ENCODE measurements at regions of chr9 and their contacts with region 1.

Region 1: DNA sequence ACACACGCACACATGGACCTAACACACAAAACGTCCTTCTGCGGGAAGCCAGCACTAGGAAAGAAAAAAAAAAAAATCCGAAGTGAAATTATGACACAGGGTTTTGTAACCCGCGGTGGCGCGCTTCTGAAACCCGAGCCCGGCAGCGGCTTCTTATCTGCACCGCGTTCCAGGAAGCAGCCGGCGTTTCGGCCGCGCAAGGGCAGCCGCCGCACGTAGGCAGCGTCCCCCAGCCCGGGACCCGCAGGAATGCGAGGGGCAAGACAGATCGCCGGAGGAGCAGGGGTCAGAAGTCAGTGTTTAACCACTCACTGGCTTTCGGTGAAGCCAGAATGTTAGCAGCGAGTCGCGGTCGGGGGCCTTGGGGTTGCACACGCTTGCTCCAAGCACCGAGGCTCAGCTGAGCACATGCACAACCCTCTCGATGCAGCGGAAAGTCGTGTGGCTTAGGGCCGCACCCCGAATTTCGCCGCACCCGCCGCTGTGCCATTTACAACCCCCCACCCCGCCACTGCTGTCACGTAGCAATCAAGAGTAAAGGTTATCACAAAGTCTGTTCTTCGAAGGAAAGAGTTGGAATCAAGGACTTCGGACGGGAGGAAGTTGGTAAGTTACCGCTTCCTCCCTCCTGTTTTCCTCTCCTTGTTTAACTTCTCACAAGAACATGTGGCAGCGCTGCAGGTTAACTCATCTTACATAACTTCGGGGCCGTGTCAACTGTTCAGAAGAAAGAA is 167.9 kb downstream of the AUH start:
- DNase-seq: peak; percentile 70
- H3K4me3 Mint-ChIP-seq: peak overlapping the region; percentile 57
- H3K27ac Mint-ChIP-seq: peak overlapping the region; percentile 81
- H3K4me1 Mint-ChIP-seq: peaks cover 36% of the 10 kb centered on the region
- H3K27me3 Mint-ChIP-seq: no peaks in the 10 kb centered on the region
- CTCF ChIP-seq: no peak

Region 2: GRCh38 chr9:91001146-91001611 is 192.6 kb before region 1 on chr9:
- CTCF ChIA-PET with region 1: no interaction called
- POLR2A ChIA-PET with region 1: interaction called, 19 read pairs
- intact Hi-C with region 1: loop called (anchors 1 kb)
- DNase-seq: peak; percentile 99
- H3K4me3 Mint-ChIP-seq: no peak overlapping the region
- H3K27ac Mint-ChIP-seq: peak overlapping the region; percentile 88
- H3K4me1 Mint-ChIP-seq: peaks cover 36% of the 10 kb centered on the region
- H3K27me3 Mint-ChIP-seq: no peaks in the 10 kb centered on the region
- CTCF ChIP-seq: no peak

Region 3: GRCh38 chr9:91100878-91101450 is 92.9 kb before region 1 on chr9:
- CTCF ChIA-PET with region 1: no interaction called
- POLR2A ChIA-PET with region 1: interaction called, 16 read pairs
- intact Hi-C with region 1: no loop called
- DNase-seq: peak; percentile 31
- H3K4me3 Mint-ChIP-seq: peak overlapping the region; percentile 38
- H3K27ac Mint-ChIP-seq: peak overlapping the region; percentile 43
- H3K4me1 Mint-ChIP-seq: peaks cover 34% of the 10 kb centered on the region
- H3K27me3 Mint-ChIP-seq: no peaks in the 10 kb centered on the region
- CTCF ChIP-seq: no peak

Region 4: DNA sequence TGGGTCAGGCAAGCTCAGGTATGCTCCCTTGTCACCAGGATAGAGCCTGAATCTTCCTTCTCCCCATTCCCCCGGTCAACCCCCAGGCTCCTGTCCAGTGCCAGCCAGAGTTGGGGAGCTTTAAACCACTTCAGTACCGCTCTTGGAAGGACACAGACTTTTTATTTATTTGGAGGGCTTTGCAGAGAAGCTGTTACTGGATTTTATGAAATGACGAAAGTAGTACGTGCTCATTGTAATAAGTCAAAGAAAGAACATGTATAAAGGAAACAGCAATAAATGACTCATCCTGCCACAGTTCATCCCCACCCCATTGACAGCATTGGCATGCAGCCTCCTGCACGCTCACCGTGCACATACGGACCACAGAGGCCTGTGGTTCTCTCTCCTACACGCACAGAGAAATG is 62.4 kb before region 1 on chr9:
- CTCF ChIA-PET with region 1: no interaction called
- POLR2A ChIA-PET with region 1: interaction called, 3 read pairs
- intact Hi-C with region 1: loop called (anchors 2 kb)
- DNase-seq: peak; percentile 93
- H3K4me3 Mint-ChIP-seq: peak overlapping the region; percentile 49
- H3K27ac Mint-ChIP-seq: peak overlapping the region; percentile 97
- H3K4me1 Mint-ChIP-seq: peaks cover 38% of the 10 kb centered on the region
- H3K27me3 Mint-ChIP-seq: no peaks in the 10 kb centered on the region
- CTCF ChIP-seq: no peak

Region 5: GRCh38 chr9:91164724-91165520 is 28.9 kb before region 1 on chr9:
- CTCF ChIA-PET with region 1: interaction called, 3 read pairs
- POLR2A ChIA-PET with region 1: interaction called, 16 read pairs
- intact Hi-C with region 1: no loop called
- DNase-seq: peak; percentile 94
- H3K4me3 Mint-ChIP-seq: peak overlapping the region; percentile 6
- H3K27ac Mint-ChIP-seq: peak overlapping the region; percentile 57
- H3K4me1 Mint-ChIP-seq: peaks cover 30% of the 10 kb centered on the region
- H3K27me3 Mint-ChIP-seq: no peaks in the 10 kb centered on the region
- CTCF ChIP-seq: no peak

Region 6: GRCh38 chr9:91207729-91208418 is 14.0 kb after region 1 on chr9:
- CTCF ChIA-PET with region 1: no interaction called
- POLR2A ChIA-PET with region 1: interaction called, 62 read pairs
- intact Hi-C with region 1: no loop called
- DNase-seq: peak; percentile 84
- H3K4me3 Mint-ChIP-seq: peak overlapping the region; percentile 40
- H3K27ac Mint-ChIP-seq: peak overlapping the region; percentile 65
- H3K4me1 Mint-ChIP-seq: peaks cover 19% of the 10 kb centered on the region
- H3K27me3 Mint-ChIP-seq: no peaks in the 10 kb centered on the region
- CTCF ChIP-seq: no peak

Region 7: GRCh38 chr9:91282292-91282691 is 88.5 kb after region 1 on chr9:
- CTCF ChIA-PET with region 1: no interaction called
- POLR2A ChIA-PET with region 1: no interaction called
- intact Hi-C with region 1: no loop called
- DNase-seq: peak; percentile 30
- H3K4me3 Mint-ChIP-seq: no peak overlapping the region
- H3K27ac Mint-ChIP-seq: peak overlapping the region; percentile 37
- H3K4me1 Mint-ChIP-seq: peaks cover 21% of the 10 kb centered on the region
- H3K27me3 Mint-ChIP-seq: no peaks in the 10 kb centered on the region
- CTCF ChIP-seq: no peak

Region 8: GRCh38 chr9:91422758-91423711 is 229.2 kb after region 1 on chr9:
- CTCF ChIA-PET with region 1: interaction called, 3 read pairs
- POLR2A ChIA-PET with region 1: interaction called, 51 read pairs
- intact Hi-C with region 1: loop called (anchors 5 kb)
- DNase-seq: peak; percentile 83
- H3K4me3 Mint-ChIP-seq: peak overlapping the region; percentile 100
- H3K27ac Mint-ChIP-seq: peak overlapping the region; percentile 99
- H3K4me1 Mint-ChIP-seq: peaks cover 41% of the 10 kb centered on the region
- H3K27me3 Mint-ChIP-seq: no peaks in the 10 kb centered on the region
- CTCF ChIP-seq: peak; percentile 24

Measured in MCF 10A (cell line).